Endothelial cell of umbilical vein (primary cell): ENCODE measurements at regions of chr18 and their contacts with region 1.

Region 1: GRCh38 chr18:24831871-24832665 is 371.6 kb downstream of the HRH4 start:
- DNase-seq: peak; percentile 98
- H3K4me3 ChIP-seq: no peak overlapping the region
- H3K27ac ChIP-seq: peak overlapping the region; percentile 93
- H3K4me1 ChIP-seq: peaks cover 37% of the 10 kb centered on the region
- H3K27me3 ChIP-seq: peaks cover 0 to 2% of the 10 kb centered on the region in 2 experiments
- CTCF ChIP-seq: no peak
- POLR2A ChIP-seq: peak; percentile 96

Region 2: GRCh38 chr18:24631243-24632025 is 200.6 kb before region 1 on chr18:
- CTCF ChIA-PET with region 1: no interaction called
- POLR2A ChIA-PET with region 1: no interaction called
- dilution Hi-C with region 1: no loop called
- intact Hi-C with region 1: no loop called
- DNase-seq: no peak
- H3K4me3 ChIP-seq: no peak overlapping the region
- H3K27ac ChIP-seq: no peak overlapping the region
- H3K4me1 ChIP-seq: peaks cover 3% of the 10 kb centered on the region
- H3K27me3 ChIP-seq: peaks cover 0 to 2% of the 10 kb centered on the region in 2 experiments
- CTCF ChIP-seq: no peak
- POLR2A ChIP-seq: no peak

Region 3: DNA sequence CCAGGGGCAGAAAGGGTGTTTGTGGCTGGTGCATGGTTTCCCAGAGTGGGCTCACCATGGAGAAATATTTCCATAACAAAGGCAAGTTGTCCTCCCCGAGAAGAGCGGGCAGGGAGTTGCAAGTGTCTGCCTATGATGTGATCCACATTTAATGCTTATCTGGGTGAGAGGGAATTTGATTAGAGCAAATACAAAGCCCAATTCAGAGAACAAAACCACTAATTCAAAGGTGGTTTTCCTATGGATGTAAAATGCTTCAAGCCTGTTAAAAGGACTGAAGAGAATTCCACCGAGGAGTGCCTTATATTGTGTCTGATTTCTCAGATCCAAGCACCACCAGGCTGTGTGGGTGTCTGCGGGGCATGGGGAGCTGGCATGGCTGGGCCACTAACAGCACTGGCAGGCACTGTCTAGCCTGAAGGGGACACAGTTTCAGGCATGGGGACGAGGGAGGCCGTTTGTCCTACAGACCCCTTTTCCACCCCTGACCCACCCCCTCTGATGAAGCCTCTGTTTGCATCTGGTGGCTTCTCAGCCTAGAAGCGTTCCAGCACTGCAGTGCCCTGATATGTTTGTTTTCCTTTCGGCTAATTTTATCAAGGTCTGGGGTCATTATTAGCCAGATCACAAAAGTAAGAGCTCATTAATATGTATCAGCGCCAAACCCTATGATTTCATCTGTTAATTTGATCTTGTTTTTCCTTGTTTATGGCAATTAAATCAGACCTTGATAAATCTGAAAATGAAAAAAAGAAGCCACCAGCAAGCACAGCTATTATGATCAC is 14.3 kb before region 1 on chr18:
- CTCF ChIA-PET with region 1: interaction called, 11 read pairs
- POLR2A ChIA-PET with region 1: no interaction called
- dilution Hi-C with region 1: no loop called
- intact Hi-C with region 1: loop called (anchors 1 kb)
- DNase-seq: no peak
- H3K4me3 ChIP-seq: no peak overlapping the region
- H3K27ac ChIP-seq: no peak overlapping the region
- H3K4me1 ChIP-seq: peaks cover 10% of the 10 kb centered on the region
- H3K27me3 ChIP-seq: no peaks in the 10 kb centered on the region
- CTCF ChIP-seq: no peak
- POLR2A ChIP-seq: no peak

Region 4: GRCh38 chr18:24913507-24914170 is 81.6 kb after region 1 on chr18:
- CTCF ChIA-PET with region 1: interaction called, 5 read pairs
- POLR2A ChIA-PET with region 1: no interaction called
- dilution Hi-C with region 1: no loop called
- intact Hi-C with region 1: loop called (anchors 1 kb)
- DNase-seq: no peak
- H3K4me3 ChIP-seq: no peak overlapping the region
- H3K27ac ChIP-seq: peak overlapping the region; percentile 65
- H3K4me1 ChIP-seq: peaks cover 33% of the 10 kb centered on the region
- H3K27me3 ChIP-seq: no peaks in the 10 kb centered on the region
- CTCF ChIP-seq: no peak
- POLR2A ChIP-seq: no peak